ENCODE measurements at regions of chr16 and their contacts with region 1.

Region 1: GRCh38 chr16:8295513-8296237 is 294.6 kb downstream of the TMEM114 start:
- DNase-seq: no peak
- ATAC-seq: no peak
- H3K4me3 ChIP-seq: no peak overlapping the region
- H3K27ac ChIP-seq: no peak overlapping the region
- H3K4me1 ChIP-seq: no peaks in the 10 kb centered on the region
- H3K27me3 ChIP-seq: no peaks in the 10 kb centered on the region
- CTCF ChIP-seq: no peak

Region 2: DNA sequence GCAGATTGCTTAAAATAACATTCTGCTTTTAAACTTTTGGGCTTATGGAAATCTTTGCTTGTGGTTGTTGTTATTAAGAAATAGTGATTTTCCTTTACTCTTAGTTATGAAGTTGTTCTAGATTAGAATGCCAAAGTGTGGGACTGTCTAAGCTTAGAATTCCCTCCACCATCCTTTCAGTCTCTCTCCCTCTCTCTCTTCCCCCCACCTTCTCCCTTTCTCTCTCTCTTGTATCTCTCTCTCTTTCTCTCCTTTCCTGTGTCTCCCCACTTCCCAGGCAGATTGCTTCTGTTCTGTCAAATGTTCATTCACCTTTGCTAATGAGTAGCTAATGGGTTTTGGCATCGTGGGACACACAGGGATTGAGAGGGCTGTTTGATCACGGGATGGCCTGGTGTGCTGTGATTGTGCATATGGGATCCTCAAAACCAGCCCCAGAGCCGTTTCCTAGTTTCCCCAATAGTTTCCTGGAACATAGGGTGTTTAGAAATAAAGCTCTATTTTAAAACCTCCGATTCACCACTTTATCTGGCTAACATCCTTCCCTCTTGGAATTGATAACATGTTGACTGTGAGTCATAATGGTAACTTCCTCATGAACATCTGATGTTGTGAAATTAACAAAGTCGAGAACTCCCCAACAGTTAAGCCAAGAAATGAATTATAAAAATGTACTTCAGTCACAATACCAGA is 207.9 kb before region 1 on chr16:
- intact Hi-C with region 1: no loop called
- DNase-seq: no peak
- ATAC-seq: peak in 1 of 4 donors; percentile 50
- H3K4me3 ChIP-seq: no peak overlapping the region
- H3K27ac ChIP-seq: no peak overlapping the region
- H3K4me1 ChIP-seq: no peaks in the 10 kb centered on the region
- H3K27me3 ChIP-seq: no peaks in the 10 kb centered on the region
- CTCF ChIP-seq: no peak

Region 3: DNA sequence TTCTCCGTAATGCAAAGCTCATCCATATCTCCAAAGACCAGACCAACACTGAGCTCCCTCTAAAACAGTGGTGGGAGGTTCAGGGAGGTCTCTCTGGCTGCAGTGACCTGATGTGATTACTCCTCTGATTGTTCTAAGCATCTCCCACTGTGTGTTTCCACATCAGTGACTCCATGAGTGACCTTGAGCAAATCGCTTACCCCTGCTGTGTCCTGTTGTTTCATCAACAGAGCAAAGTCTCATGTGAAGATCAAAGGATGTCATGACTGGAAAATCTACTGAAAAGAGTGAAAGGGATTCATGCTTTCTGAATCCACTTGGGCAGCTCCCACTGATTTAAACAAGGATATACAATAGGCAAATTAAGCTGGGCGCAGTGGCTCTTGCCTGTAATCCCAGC is 58.2 kb before region 1 on chr16:
- intact Hi-C with region 1: loop called in 1 of 3 experiments (anchors 10 kb)
- DNase-seq: no peak
- ATAC-seq: no peak
- H3K4me3 ChIP-seq: no peak overlapping the region
- H3K27ac ChIP-seq: no peak overlapping the region
- H3K4me1 ChIP-seq: no peaks in the 10 kb centered on the region
- H3K27me3 ChIP-seq: no peaks in the 10 kb centered on the region
- CTCF ChIP-seq: no peak

Region 4: DNA sequence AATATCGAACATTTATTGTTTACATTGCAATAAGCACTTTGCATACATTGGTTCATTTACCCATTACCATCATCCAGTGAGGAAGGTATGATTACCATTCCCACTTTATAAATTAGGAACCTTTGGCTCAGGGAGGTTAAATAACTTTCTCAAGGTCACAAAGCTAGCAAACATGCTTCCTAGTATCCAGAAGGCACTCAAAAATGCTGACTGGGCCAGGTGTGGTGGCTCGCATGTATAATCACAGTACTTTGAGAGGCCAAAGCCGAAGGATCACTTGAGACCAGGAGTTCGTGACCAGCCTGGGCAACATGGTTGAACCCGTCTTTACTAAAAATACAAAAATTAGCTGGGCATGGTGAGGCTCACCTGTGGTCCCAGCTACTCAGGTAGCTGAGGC is 35.1 kb after region 1 on chr16:
- intact Hi-C with region 1: no loop called
- DNase-seq: no peak
- ATAC-seq: no peak
- H3K4me3 ChIP-seq: no peak overlapping the region
- H3K27ac ChIP-seq: no peak overlapping the region
- H3K4me1 ChIP-seq: no peaks in the 10 kb centered on the region
- H3K27me3 ChIP-seq: no peaks in the 10 kb centered on the region
- CTCF ChIP-seq: no peak

Region 5: GRCh38 chr16:8346278-8346677 is 50.6 kb after region 1 on chr16:
- intact Hi-C with region 1: no loop called
- DNase-seq: peak in 1 of 6 donors; percentile 14
- ATAC-seq: peak in 2 of 4 donors; percentile 48 to 70
- H3K4me3 ChIP-seq: no peak overlapping the region
- H3K27ac ChIP-seq: no peak overlapping the region
- H3K4me1 ChIP-seq: no peaks in the 10 kb centered on the region
- H3K27me3 ChIP-seq: no peaks in the 10 kb centered on the region
- CTCF ChIP-seq: no peak

Region 6: DNA sequence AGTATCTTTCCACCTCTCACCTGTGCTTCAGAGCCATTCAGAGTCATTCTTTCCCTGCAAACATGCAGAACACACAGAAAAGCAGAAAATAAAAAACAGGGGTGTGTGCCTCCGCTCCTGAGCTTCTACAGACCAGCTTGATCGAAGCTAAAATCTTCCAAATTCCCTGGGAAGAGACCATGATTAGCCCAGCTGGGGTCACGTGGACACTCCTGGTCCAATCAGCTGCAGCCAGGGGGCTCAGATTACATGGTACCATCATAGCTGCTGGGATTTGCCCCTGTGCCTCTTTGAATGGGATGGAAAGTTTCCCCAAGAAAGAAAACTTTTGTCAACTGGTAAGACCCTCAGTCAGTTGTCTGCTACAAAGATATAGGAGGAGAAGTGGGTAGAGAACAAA is 134.7 kb after region 1 on chr16:
- intact Hi-C with region 1: no loop called
- DNase-seq: no peak
- ATAC-seq: no peak
- H3K4me3 ChIP-seq: no peak overlapping the region
- H3K27ac ChIP-seq: no peak overlapping the region
- H3K4me1 ChIP-seq: no peaks in the 10 kb centered on the region
- H3K27me3 ChIP-seq: no peaks in the 10 kb centered on the region
- CTCF ChIP-seq: no peak